ENCODE measurements at regions of chr7 and their contacts with region 1.

Region 1: GRCh38 chr7:142853739-142854371 is 1.0 kb upstream of the EPHB6 start:
- DNase-seq: peak; percentile 76
- ATAC-seq: peak; percentile 88
- H3K4me3 Mint-ChIP-seq: peak overlapping the region; percentile 97
- H3K27ac Mint-ChIP-seq: peak overlapping the region; percentile 95
- H3K4me1 Mint-ChIP-seq: peaks cover 27% of the 10 kb centered on the region
- H3K27me3 Mint-ChIP-seq: no peaks in the 10 kb centered on the region
- CTCF ChIP-seq: peak; percentile 61

Region 2: GRCh38 chr7:142153400-142153799 is 700.5 kb before region 1 on chr7:
- CTCF ChIA-PET with region 1: no interaction called
- POLR2A ChIA-PET with region 1: no interaction called
- intact Hi-C with region 1: no loop called
- DNase-seq: no peak
- ATAC-seq: no peak
- H3K4me3 Mint-ChIP-seq: no peak overlapping the region
- H3K27ac Mint-ChIP-seq: no peak overlapping the region
- H3K4me1 Mint-ChIP-seq: no peaks in the 10 kb centered on the region
- H3K27me3 Mint-ChIP-seq: no peaks in the 10 kb centered on the region
- CTCF ChIP-seq: no peak

Region 3: DNA sequence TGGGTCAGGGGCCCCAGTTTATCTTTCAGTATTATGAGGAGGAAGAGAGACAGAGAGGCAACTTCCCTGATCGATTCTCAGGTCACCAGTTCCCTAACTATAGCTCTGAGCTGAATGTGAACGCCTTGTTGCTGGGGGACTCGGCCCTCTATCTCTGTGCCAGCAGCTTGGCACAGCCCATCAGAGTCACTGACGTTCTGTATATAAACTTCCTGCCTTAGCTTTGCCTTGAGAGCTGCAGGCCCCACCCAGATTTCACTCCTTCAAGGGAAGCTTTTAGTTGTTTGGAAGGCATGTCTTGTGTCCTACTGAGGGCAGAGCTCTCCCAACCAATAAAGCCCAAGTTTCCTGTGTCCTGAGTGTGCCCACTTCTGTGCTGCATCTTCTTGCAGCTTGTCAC is 353.5 kb before region 1 on chr7:
- CTCF ChIA-PET with region 1: no interaction called
- POLR2A ChIA-PET with region 1: no interaction called
- intact Hi-C with region 1: no loop called
- DNase-seq: no peak
- ATAC-seq: no peak
- H3K4me3 Mint-ChIP-seq: no peak overlapping the region
- H3K27ac Mint-ChIP-seq: no peak overlapping the region
- H3K4me1 Mint-ChIP-seq: peaks cover 4% of the 10 kb centered on the region
- H3K27me3 Mint-ChIP-seq: peaks cover 35% of the 10 kb centered on the region
- CTCF ChIP-seq: no peak

Region 4: DNA sequence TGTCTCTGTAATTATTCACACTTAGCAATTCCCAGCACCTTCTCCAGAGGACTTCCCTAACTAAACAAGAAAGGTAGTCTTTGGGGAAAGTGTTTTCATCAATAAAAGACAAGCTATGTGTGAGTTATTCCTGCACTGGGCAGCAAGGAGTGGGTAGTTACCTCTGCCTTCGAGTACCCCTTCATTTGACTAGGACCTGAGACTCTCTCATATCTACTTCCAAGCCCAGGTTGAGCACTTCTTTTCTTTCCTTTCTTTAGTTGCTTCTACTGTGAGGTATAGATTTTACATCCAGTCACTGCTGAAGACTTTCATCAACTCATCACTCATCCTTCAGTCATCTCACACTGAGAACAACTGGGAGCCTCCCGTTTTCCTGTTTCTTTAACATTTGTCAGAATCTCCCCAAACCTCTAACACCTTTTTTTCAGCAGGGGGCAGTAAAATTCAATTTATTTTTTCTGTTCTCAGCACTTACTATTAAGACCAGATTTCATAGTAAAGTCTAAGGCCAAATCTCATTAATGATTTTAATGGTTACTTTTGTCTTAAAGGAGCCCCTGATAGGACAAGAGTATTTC is 184.7 kb before region 1 on chr7:
- CTCF ChIA-PET with region 1: no interaction called
- POLR2A ChIA-PET with region 1: no interaction called
- intact Hi-C with region 1: loop called (anchors 1 kb)
- DNase-seq: no peak
- ATAC-seq: peak; percentile 28
- H3K4me3 Mint-ChIP-seq: peak overlapping the region; percentile 13
- H3K27ac Mint-ChIP-seq: no peak overlapping the region
- H3K4me1 Mint-ChIP-seq: peaks cover 30% of the 10 kb centered on the region
- H3K27me3 Mint-ChIP-seq: no peaks in the 10 kb centered on the region
- CTCF ChIP-seq: no peak

Region 5: GRCh38 chr7:142796608-142797385 is 57.1 kb before region 1 on chr7:
- CTCF ChIA-PET with region 1: interaction called, 5 read pairs
- POLR2A ChIA-PET with region 1: interaction called, 38 read pairs
- intact Hi-C with region 1: loop called (anchors 1 kb)
- DNase-seq: peak; percentile 47
- ATAC-seq: peak; percentile 44
- H3K4me3 Mint-ChIP-seq: peak overlapping the region; percentile 97
- H3K27ac Mint-ChIP-seq: peak overlapping the region; percentile 99
- H3K4me1 Mint-ChIP-seq: peaks cover 83% of the 10 kb centered on the region
- H3K27me3 Mint-ChIP-seq: no peaks in the 10 kb centered on the region
- CTCF ChIP-seq: no peak

Region 6: DNA sequence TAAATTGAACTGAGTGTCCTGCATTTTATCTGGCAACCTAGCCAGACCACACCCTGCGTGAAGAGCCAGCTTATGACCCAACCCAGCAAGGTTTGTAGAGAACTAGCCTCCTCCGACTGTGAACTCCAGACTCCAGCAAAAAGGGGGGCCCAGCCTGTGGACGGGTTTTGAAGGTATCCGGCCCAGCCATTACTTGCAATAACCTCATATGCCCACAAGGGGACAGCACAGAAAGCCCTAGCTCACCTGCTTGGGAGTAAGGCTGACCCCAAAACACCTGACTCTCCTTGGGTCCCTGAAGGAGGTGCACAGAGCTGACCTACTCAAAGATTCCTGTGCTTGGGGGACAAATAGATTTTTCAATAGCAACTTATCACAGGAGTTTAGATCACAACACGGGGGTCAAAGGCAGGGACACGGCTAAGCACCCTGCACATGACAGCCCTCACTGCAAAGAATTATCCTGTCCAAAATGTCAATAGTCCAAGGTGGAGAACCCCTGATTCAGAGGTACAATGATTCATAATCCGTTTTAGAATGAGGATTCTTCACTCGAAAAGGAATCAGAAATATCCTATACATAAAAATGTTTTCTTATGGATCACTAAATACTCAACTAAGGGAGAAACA is 27.1 kb after region 1 on chr7:
- CTCF ChIA-PET with region 1: interaction called, 3 read pairs
- POLR2A ChIA-PET with region 1: no interaction called
- intact Hi-C with region 1: loop called (anchors 1 kb)
- DNase-seq: no peak
- ATAC-seq: peak; percentile 79
- H3K4me3 Mint-ChIP-seq: no peak overlapping the region
- H3K27ac Mint-ChIP-seq: no peak overlapping the region
- H3K4me1 Mint-ChIP-seq: no peaks in the 10 kb centered on the region
- H3K27me3 Mint-ChIP-seq: peaks cover 15% of the 10 kb centered on the region
- CTCF ChIP-seq: peak; percentile 43

Region 7: DNA sequence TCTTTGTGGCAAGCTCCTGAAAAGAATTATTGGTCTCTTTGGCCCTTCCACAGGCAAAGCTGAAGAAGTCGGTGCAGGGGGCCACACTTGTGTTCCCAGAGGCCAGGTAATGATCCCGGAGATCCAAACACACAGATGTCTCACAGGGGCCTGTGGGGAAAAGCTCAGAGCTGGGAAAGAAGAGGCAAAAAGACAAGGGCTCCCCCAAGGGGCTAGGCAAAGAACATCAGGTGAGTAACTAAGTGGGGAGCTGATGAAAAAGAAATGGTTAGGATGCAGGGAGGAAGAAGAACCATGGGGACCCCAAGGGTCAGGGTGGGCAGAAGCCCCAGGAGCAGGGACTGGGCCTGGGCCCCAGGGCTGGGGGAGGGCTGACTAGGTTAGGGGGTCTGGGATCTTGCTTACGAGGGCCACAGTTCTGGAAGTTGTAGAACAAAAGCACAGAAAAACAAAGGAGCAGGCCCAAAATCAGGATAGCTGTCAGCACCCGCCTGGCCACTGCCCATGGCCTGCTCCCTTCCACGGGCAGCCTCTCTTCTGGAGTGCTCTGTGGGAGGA is 107.2 kb after region 1 on chr7:
- CTCF ChIA-PET with region 1: no interaction called
- POLR2A ChIA-PET with region 1: no interaction called
- intact Hi-C with region 1: no loop called
- DNase-seq: no peak
- ATAC-seq: no peak
- H3K4me3 Mint-ChIP-seq: no peak overlapping the region
- H3K27ac Mint-ChIP-seq: no peak overlapping the region
- H3K4me1 Mint-ChIP-seq: peaks cover 3% of the 10 kb centered on the region
- H3K27me3 Mint-ChIP-seq: peaks cover 26% of the 10 kb centered on the region
- CTCF ChIP-seq: no peak

Region 8: DNA sequence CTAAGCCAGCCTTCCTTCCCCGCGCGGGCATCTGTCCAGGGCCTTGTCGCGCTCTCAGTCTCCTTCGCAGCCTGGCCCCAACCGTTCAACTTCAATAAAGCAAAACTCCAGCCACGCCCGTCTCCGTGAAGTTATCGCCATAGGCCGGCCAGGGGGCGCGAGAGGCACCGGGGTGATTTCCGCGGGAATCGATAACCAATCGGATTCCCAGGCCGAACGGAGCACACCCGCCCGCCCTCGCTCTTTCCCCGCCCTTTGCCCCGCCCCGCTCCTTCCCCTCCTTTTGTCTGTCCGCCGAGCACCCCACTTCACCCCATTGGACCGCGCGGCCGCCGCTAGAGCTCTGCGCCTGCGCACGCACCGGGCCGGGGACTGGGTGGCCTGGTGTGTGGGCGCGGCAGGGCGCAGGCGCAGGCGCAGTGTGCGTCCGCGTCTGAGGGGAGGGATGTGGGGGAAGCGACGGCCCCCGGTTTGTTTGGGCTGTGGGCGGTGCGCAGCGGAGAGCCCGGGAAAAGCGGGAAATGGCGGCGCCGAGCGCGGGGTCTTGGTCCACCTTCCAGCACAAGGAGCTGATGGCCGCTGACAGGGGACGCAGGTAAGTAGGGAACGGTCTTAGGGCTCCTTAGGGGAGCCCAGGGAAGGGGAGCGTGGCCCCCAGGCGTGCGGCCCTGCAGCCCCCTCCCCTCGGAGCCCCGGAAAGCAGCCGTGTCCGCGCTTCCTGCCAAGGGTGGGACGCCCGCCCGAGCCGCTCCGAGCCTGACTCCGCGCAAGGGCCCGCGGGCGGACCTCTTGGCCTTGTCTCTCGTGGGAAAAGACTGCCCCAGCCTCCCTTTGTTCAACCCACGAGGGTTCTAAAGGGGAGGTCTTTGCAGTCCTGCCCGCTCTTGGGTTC is 434.3 kb after region 1 on chr7 and contains the start of gene CASP2:
- CTCF ChIA-PET with region 1: no interaction called
- POLR2A ChIA-PET with region 1: interaction called, 5 read pairs
- intact Hi-C with region 1: loop called (anchors 10 kb)
- DNase-seq: peak; percentile 97
- ATAC-seq: peak; percentile 91
- H3K4me3 Mint-ChIP-seq: peak within 1 kb of the TSS; percentile 96
- H3K27ac Mint-ChIP-seq: peak within 1 kb of the TSS; percentile 89
- H3K4me1 Mint-ChIP-seq: peaks cover 54% of the 10 kb centered on the region
- H3K27me3 Mint-ChIP-seq: no peaks in the 10 kb centered on the region
- CTCF ChIP-seq: no peak
- total RNA-seq, gene CASP2: 59.5 and 62.2 TPM in 2 replicates

Measured in activated B cell treated with CpG ODN at 0.5 μM for 24 hours (primary cell).